PC-9 (cell line): ENCODE measurements at regions of chr14 and their contacts with region 1.

Region 1: GRCh38 chr14:50773632-50774541 is 57.1 kb downstream of the NIN start:
- DNase-seq: peak in 1 of 2 experiments; percentile 53
- H3K4me3 ChIP-seq: no peak overlapping the region
- H3K27ac ChIP-seq: no peak overlapping the region
- H3K4me1 ChIP-seq: peaks cover 23% of the 10 kb centered on the region
- H3K27me3 ChIP-seq: no peaks in the 10 kb centered on the region
- CTCF ChIP-seq: peak; percentile 80

Region 2: DNA sequence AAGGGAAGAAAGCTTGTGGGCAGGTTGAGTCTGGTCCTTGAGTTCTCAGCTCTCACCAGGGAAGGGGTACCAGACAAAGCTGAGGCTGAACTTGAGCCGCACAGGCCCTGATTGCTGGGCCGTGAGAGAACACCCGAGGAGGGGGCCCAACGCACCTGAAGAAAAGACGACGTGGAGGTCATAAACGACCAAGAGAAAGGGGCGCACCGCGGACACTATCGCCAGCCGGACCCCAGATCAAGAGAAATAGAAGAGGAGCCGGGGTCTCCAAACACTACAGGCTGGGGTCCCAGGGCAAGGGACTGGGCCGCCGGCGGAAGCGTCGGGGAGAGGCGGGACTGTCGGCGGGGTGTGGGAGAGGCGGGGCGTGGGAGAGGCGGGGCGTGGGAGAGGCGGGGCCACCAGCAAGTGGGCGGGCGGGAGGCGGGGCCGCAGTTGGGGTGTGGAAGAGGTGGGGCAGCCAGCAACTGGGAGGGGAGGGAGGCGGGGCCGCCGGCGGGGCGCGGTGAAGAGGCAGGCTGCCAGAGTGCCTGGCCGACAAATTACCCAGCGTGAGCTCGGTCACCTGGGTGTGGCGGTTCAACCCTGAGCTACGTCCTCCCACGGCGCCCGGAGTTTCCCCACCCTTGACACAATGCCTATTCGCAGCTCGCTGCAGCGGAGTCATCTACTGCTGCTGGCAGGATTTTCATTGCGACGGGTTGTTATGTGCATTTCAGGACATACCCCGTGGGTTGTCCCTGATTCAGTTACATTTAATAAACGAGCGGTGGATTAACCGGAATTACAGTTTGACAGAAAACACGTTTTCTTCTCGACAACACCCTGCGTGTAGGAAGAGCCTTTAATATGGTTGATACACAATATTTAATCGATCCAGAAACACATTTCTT is 905.8 kb before region 1 on chr14:
- CTCF ChIA-PET with region 1: no interaction called
- POLR2A ChIA-PET with region 1: no interaction called
- intact Hi-C with region 1: loop called (anchors 10 kb)
- DNase-seq: peak; percentile 88 to 94
- H3K4me3 ChIP-seq: peak overlapping the region; percentile 85
- H3K27ac ChIP-seq: peak overlapping the region; percentile 78
- H3K4me1 ChIP-seq: peaks cover 32% of the 10 kb centered on the region
- H3K27me3 ChIP-seq: no peaks in the 10 kb centered on the region
- CTCF ChIP-seq: no peak

Region 3: GRCh38 chr14:50321009-50321660 is 452.8 kb before region 1 on chr14:
- CTCF ChIA-PET with region 1: interaction called, 6 read pairs
- POLR2A ChIA-PET with region 1: no interaction called
- intact Hi-C with region 1: loop called (anchors 2 kb)
- DNase-seq: peak; percentile 66 to 99
- H3K4me3 ChIP-seq: no peak overlapping the region
- H3K27ac ChIP-seq: peak overlapping the region; percentile 82
- H3K4me1 ChIP-seq: peaks cover 31% of the 10 kb centered on the region
- H3K27me3 ChIP-seq: no peaks in the 10 kb centered on the region
- CTCF ChIP-seq: peak; percentile 82

Region 4: GRCh38 chr14:50532502-50533240 is 241.2 kb before region 1 on chr14 and contains the start of gene MAP4K5:
- CTCF ChIA-PET with region 1: interaction called, 4 read pairs
- POLR2A ChIA-PET with region 1: no interaction called
- intact Hi-C with region 1: loop called (anchors 1 kb)
- DNase-seq: peak; percentile 88 to 92
- H3K4me3 ChIP-seq: peak within 1 kb of the TSS; percentile 92
- H3K27ac ChIP-seq: peak within 1 kb of the TSS; percentile 64
- H3K4me1 ChIP-seq: peaks cover 47% of the 10 kb centered on the region
- H3K27me3 ChIP-seq: no peaks in the 10 kb centered on the region
- CTCF ChIP-seq: peak; percentile 84
- total RNA-seq, gene MAP4K5: 51.8 and 66.6 TPM in 2 replicates

Region 5: GRCh38 chr14:50619556-50620141 is 154.2 kb before region 1 on chr14:
- CTCF ChIA-PET with region 1: no interaction called
- POLR2A ChIA-PET with region 1: interaction called, 5 read pairs
- intact Hi-C with region 1: loop called (anchors 1 kb)
- DNase-seq: no peak
- H3K4me3 ChIP-seq: no peak overlapping the region
- H3K27ac ChIP-seq: no peak overlapping the region
- H3K4me1 ChIP-seq: no peaks in the 10 kb centered on the region
- H3K27me3 ChIP-seq: no peaks in the 10 kb centered on the region
- CTCF ChIP-seq: peak; percentile 74

Region 6: GRCh38 chr14:50736932-50737419 is 36.9 kb before region 1 on chr14:
- CTCF ChIA-PET with region 1: no interaction called
- POLR2A ChIA-PET with region 1: no interaction called
- intact Hi-C with region 1: loop called (anchors 2 kb)
- DNase-seq: no peak
- H3K4me3 ChIP-seq: no peak overlapping the region
- H3K27ac ChIP-seq: no peak overlapping the region
- H3K4me1 ChIP-seq: peaks cover 32% of the 10 kb centered on the region
- H3K27me3 ChIP-seq: no peaks in the 10 kb centered on the region
- CTCF ChIP-seq: no peak

Region 7: DNA sequence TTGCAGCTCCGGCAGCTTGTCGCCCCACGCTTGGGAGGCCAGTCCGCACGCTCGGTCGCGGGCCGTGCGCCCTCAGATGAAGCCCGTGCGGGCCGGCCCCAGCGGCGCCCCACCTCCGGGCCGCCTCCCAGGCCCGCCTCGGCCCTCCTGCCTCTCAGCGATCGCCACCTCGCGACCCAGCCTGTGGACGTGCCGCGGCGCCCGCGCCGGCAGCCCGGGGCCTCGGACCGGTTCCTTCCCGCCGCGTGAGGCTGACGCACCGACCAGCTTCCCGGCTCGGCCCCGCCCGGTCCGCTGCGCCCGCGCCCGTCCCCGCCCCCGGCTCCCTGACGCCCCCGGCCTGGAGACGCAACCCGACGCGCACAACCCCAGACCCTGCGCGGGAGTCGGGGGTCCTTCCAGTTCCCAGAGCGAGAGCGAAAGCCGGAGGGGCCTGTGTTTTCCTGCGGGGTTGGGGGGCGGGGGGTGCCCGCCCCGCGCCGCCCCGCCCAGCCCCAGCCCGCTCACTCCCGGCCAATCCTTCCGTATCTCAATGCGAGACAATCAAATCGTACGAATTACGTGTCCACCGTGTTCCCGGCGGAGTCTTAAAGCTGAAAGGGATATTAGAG is 1921.7 kb after region 1 on chr14 and contains the start of gene ERO1A:
- CTCF ChIA-PET with region 1: no interaction called
- POLR2A ChIA-PET with region 1: interaction called, 16 read pairs
- intact Hi-C with region 1: no loop called
- DNase-seq: peak; percentile 69 to 85
- H3K4me3 ChIP-seq: peak within 1 kb of the TSS; percentile 62
- H3K27ac ChIP-seq: peak within 1 kb of the TSS; percentile 92
- H3K4me1 ChIP-seq: peaks cover 55% of the 10 kb centered on the region
- H3K27me3 ChIP-seq: no peaks in the 10 kb centered on the region
- CTCF ChIP-seq: no peak
- total RNA-seq, gene ERO1A: 83.6 and 83.9 TPM in 2 replicates